ENCODE measurements at regions of chr11 and their contacts with region 1.

Region 1: GRCh38 chr11:112174789-112175598 is at the start of gene BCO2:
- DNase-seq: peak; percentile 71
- ATAC-seq: peak; percentile 96
- H3K4me3 ChIP-seq: peak within 1 kb of the TSS; percentile 37; the same call in 1 of the 2 replicates
- H3K27ac ChIP-seq: no peak within 1 kb of the TSS
- H3K4me1 ChIP-seq: peaks cover 4% of the 10 kb centered on the region; the same call in 1 of the 2 replicates
- H3K27me3 ChIP-seq: peaks cover 3% of the 10 kb centered on the region; the same call in 1 of the 2 replicates
- CTCF ChIP-seq: peak; percentile 92
- POLR2A ChIP-seq: no peak
- RAD21 ChIP-seq: peak; percentile 83
- total RNA-seq, gene BCO2: 0.18 and 0.83 TPM in 2 replicates

Region 2: DNA sequence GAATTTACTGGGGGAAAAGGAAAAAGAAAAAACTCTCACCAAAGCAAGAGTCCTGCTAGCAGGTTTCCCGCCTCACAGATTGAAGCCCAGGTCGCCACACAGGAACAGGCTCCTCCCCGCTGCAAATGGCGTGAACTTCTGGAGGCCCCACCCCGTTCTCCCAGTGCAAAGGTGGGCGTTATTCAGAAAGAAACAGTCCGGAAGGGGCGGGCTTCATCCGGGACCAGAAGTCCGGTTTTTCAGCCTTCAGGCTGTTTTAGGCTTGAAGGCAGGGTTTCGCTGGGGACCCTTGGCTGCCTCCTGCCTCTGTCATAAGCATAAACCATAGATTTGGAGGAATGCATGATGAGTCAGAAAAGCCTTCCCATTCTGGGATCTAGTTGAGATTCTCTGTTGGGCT is 1077.8 kb before region 1 on chr11:
- CTCF ChIA-PET with region 1: no interaction called
- POLR2A ChIA-PET with region 1: no interaction called
- dilution Hi-C with region 1: no loop called
- in situ Hi-C with region 1: no loop called
- intact Hi-C with region 1: no loop called
- DNase-seq: peak; percentile 62
- ATAC-seq: peak; percentile 48
- H3K4me3 ChIP-seq: peak overlapping the region; percentile 56
- H3K27ac ChIP-seq: peak overlapping the region; percentile 2
- H3K4me1 ChIP-seq: no peaks in the 10 kb centered on the region
- H3K27me3 ChIP-seq: no peaks in the 10 kb centered on the region
- CTCF ChIP-seq: no peak
- POLR2A ChIP-seq: no peak
- RAD21 ChIP-seq: no peak

Region 3: DNA sequence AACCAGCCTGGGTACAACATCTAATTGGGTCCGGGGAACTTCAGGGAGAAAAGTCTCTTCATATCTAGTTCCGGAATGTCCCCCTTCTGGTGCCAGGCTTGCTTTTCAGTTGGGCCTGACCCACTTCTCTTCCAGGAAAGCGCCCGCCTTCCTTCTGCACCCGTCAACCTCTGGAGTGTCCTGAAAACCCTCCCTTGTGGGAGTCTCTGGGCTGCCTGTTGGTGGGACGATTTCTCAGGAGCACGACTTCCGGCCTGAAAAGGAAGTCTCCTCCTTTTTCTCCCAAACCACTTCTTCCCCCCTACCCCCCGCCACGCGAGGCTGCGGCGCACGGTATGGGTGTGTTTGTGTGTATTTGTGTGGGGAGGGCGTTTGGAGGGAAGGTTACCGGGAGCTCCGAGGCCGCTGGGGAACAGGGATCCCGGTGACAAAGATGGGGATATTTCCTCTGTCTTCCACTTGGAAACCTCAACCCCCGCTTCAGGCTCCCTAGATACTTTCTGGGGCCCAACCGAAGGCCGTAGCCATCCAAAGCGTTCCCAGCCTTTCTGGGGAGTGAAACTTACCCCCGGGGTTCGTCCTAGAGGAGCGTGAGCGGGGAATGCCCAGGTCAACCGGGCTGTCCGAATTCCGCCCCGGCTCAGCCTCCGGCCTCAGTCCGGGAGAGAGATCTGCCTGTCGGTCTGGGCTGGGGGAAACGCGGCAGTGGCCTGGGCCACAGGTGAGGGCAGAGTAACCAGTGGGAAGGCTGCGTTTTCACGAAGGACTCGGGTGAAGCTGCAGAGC is 100.8 kb before region 1 on chr11 and contains the start of gene NKAPD1:
- CTCF ChIA-PET with region 1: no interaction called
- POLR2A ChIA-PET with region 1: no interaction called
- dilution Hi-C with region 1: no loop called
- in situ Hi-C with region 1: no loop called
- intact Hi-C with region 1: loop called (anchors 1 kb)
- DNase-seq: peak; percentile 88
- ATAC-seq: peak; percentile 94
- H3K4me3 ChIP-seq: peak within 1 kb of the TSS; percentile 80
- H3K27ac ChIP-seq: peak within 1 kb of the TSS; percentile 85
- H3K4me1 ChIP-seq: no peaks in the 10 kb centered on the region
- H3K27me3 ChIP-seq: no peaks in the 10 kb centered on the region
- CTCF ChIP-seq: no peak
- POLR2A ChIP-seq: no peak
- RAD21 ChIP-seq: no peak
- total RNA-seq, gene NKAPD1: 17.2 and 24.4 TPM in 2 replicates

Region 4: DNA sequence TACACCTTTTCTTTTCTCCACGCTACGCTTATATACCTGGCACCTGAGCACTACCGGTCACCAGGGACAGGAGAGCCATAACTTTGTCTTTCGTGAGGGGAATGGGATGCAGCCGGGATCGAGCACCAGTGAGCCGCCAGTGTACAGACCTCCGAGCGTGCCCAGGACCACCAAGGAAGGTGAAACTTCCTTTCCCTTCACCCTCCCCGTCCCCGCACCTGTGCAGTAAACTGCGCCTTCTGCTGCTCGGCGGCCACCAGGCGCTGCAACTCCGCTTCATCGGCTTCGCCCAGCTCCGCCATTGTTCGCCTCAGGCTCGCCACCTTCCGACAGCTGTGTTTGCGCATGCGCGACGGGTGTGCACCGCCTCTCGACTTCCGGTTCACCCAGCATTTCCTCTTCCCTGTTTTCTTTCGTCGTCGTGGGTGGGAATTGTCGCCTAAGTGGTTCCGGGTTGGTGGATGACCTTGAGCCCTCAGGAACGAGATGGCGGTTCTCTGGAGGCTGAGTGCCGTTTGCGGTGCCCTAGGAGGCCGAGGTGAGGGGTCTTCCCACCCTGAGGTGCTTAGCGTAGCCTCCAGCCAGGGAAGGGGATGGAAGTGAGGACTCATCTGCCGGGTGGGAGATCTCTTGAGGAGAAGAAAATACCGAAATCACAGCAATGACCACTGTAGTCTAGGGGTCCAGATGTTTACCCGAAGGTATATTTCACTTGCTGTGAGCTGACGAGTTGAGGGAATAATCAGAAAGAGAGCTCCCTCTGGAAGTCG is 88.4 kb before region 1 on chr11 and contains the starts of genes SDHD and TIMM8B:
- CTCF ChIA-PET with region 1: no interaction called
- POLR2A ChIA-PET with region 1: interaction called, 10 read pairs
- dilution Hi-C with region 1: no loop called
- in situ Hi-C with region 1: no loop called
- intact Hi-C with region 1: loop called (anchors 1 kb)
- DNase-seq: peak; percentile 96
- ATAC-seq: peak; percentile 92
- H3K4me3 ChIP-seq: peak within 1 kb of the TSS; percentile 78
- H3K27ac ChIP-seq: peak within 1 kb of the TSS; percentile 84
- H3K4me1 ChIP-seq: peaks cover 2% of the 10 kb centered on the region; the same call in 1 of the 2 replicates
- H3K27me3 ChIP-seq: no peaks in the 10 kb centered on the region
- CTCF ChIP-seq: peak; percentile 44
- POLR2A ChIP-seq: peak; percentile 73
- RAD21 ChIP-seq: peak; percentile 45
- total RNA-seq, gene SDHD: 83.2 and 130 TPM in 2 replicates
- total RNA-seq, gene TIMM8B: 35.5 and 48.9 TPM in 2 replicates

Region 5: GRCh38 chr11:112113539-112114457 is 61.2 kb before region 1 on chr11:
- CTCF ChIA-PET with region 1: interaction called, 13 read pairs
- POLR2A ChIA-PET with region 1: no interaction called
- dilution Hi-C with region 1: no loop called
- in situ Hi-C with region 1: no loop called
- intact Hi-C with region 1: loop called (anchors 1 kb)
- DNase-seq: peak; percentile 69
- ATAC-seq: peak; percentile 84
- H3K4me3 ChIP-seq: no peak overlapping the region
- H3K27ac ChIP-seq: no peak overlapping the region
- H3K4me1 ChIP-seq: no peaks in the 10 kb centered on the region
- H3K27me3 ChIP-seq: no peaks in the 10 kb centered on the region
- CTCF ChIP-seq: peak; percentile 69
- POLR2A ChIP-seq: no peak
- RAD21 ChIP-seq: peak; percentile 75

Region 6: DNA sequence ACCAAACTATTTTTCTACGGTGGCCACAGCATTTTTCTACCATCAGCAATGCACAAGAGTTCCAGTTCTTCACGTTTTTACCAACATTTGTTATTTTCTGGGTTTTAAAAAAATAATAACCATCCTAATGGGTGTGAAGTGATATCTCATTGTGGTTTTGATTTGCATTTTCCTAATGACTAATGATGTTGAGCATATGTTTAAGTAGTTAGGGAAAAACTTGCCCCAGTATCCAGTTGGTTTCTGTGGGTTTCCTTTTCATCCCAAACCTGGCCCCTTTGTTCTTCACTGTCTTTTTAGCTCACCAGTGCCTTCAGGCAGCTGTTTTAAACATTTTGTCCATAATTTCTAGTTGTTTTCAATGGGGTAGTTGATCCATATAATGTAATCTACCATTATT is 36.5 kb after region 1 on chr11:
- CTCF ChIA-PET with region 1: no interaction called
- POLR2A ChIA-PET with region 1: no interaction called
- dilution Hi-C with region 1: no loop called
- in situ Hi-C with region 1: no loop called
- intact Hi-C with region 1: loop called (anchors 5 kb)
- DNase-seq: no peak
- ATAC-seq: no peak
- H3K4me3 ChIP-seq: no peak overlapping the region
- H3K27ac ChIP-seq: no peak overlapping the region
- H3K4me1 ChIP-seq: peaks cover 13% of the 10 kb centered on the region
- H3K27me3 ChIP-seq: no peaks in the 10 kb centered on the region
- CTCF ChIP-seq: no peak
- POLR2A ChIP-seq: no peak
- RAD21 ChIP-seq: no peak

Measured in IMR-90 (cell line).